Pancreas (tissue), 10 donors: ENCODE measurements at regions of chr7 and their contacts with region 1.

Region 1: DNA sequence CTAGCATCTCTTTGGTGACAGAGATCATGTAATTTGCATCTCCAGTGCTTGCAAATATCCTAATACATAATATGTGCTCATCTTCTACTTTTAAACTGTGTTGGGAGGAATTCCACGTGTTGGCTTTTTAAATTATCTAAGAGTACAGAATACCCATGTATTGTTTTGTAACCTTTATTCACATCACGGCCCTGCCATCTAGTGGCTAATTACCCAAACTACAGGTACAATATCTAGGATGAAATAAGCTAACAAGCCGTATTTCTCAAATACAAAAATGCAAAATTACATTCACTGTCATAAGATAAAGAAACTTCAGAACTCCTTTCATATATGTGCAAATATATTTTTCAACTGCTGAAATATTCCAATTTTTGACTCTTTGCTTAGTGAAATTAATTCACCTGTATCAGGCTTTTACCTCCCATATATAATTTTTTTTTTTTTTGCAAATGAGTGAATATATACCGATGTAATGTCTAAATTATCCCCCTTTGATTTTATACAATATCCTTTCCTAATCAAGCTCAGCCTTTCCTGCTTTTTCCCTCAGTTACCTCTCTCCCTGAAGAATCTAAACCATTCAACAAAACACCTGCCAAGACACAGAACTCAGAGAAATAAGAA is 30.3 kb upstream of the LSM8 start:
- DNase-seq: peak in 1 of 6 donors; percentile 18
- ATAC-seq: peak in 3 of 4 donors; percentile 72 to 84 (median 79)
- H3K4me3 ChIP-seq: no peak overlapping the region
- H3K27ac ChIP-seq: no peak overlapping the region
- H3K4me1 ChIP-seq: no peaks in the 10 kb centered on the region
- H3K27me3 ChIP-seq: peaks cover 0 to 2% (median 0%) of the 10 kb centered on the region in 4 donors
- CTCF ChIP-seq: peak; percentile 39 to 57 (median 56)

Region 2: DNA sequence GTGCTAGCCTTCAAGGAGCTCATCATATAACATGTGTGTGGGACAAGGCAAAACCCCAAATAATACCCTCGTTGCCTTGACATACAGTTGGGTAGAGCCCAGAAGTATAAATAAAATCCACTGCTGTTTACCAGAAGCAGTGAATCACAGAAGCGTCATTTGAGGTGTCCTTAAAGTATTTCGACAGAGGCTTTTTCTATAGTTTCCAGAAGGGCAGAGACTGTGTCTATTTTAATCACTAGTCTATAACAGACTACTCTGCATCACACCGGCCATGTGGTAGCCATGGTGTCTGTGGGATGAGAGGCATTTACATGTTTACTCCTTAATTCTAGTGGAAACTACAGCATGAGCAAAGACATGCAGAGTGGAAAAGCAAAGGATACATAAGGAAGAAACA is 411.7 kb before region 1 on chr7:
- intact Hi-C with region 1: loop called in 1 of 3 experiments (anchors 10 kb)
- DNase-seq: no peak
- ATAC-seq: no peak
- H3K4me3 ChIP-seq: no peak overlapping the region
- H3K27ac ChIP-seq: no peak overlapping the region
- H3K4me1 ChIP-seq: no peaks in the 10 kb centered on the region
- H3K27me3 ChIP-seq: no peaks in the 10 kb centered on the region
- CTCF ChIP-seq: no peak